Activated naive CD4-positive, alpha-beta T cell treated with anti-CD3 and anti-CD28 coated beads for 36 hours (primary cell): ENCODE measurements at regions of chr7 and their contacts with region 1.

Region 1: DNA sequence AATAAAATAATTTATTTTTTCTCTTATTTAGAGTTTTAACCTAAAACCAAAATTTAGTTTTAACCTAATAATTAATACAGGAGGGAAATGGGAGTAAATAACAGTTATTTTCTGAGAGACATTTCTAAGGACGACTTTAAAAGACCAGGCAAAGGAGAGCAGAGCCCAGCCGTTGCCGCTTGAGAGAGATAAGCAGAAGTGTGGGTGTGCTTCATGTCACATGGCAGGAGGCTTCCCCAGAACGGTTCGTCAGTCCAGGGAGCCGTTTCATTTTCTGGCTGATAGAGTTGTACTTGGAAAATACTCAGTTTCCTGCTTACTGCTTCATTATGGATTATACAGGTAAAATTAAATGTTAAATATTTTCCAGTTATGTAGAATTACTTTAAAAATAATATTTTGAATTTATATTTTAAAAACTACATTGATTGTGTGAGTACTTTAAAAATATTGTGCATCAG is 61.4 kb downstream of the ST7 start:
- DNase-seq: peak; percentile 28
- H3K4me3 Mint-ChIP-seq: no peak overlapping the region
- H3K27ac Mint-ChIP-seq: no peak overlapping the region
- H3K4me1 Mint-ChIP-seq: peaks cover 40% of the 10 kb centered on the region
- H3K27me3 Mint-ChIP-seq: peaks cover 3% of the 10 kb centered on the region

Region 2: DNA sequence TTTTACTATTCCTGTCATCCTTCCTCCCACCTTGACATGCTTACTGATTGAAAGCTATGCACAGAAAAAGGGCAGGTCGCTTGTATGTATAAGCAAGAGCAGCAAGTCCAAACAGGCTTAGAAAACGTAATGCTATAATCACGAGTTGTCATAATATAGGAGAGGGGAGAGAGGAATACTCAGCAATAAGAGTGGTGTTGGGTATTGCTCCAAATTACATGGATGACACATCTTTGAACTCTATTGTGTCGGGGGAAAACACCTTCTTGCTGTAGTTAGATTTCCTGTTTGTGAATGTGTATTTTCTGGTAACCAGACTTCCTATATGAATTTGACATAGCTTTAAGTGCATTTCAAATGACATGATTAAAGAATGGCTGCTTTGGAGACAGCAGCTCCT is 335.2 kb before region 1 on chr7:
- CTCF ChIA-PET with region 1: no interaction called
- intact Hi-C with region 1: loop called (anchors 5 kb)
- DNase-seq: no peak
- H3K4me3 Mint-ChIP-seq: no peak overlapping the region
- H3K27ac Mint-ChIP-seq: no peak overlapping the region
- H3K4me1 Mint-ChIP-seq: peaks cover 6% of the 10 kb centered on the region
- H3K27me3 Mint-ChIP-seq: peaks cover 25% of the 10 kb centered on the region

Region 3: GRCh38 chr7:116929914-116930913 is 84.5 kb before region 1 on chr7:
- CTCF ChIA-PET with region 1: interaction called, 6 read pairs
- intact Hi-C with region 1: loop called (anchors 1 kb)
- DNase-seq: peak; percentile 85
- H3K4me3 Mint-ChIP-seq: no peak overlapping the region
- H3K27ac Mint-ChIP-seq: no peak overlapping the region
- H3K4me1 Mint-ChIP-seq: peaks cover 3% of the 10 kb centered on the region
- H3K27me3 Mint-ChIP-seq: no peaks in the 10 kb centered on the region

Region 4: GRCh38 chr7:116984917-116985316 is 29.8 kb before region 1 on chr7:
- CTCF ChIA-PET with region 1: interaction called, 123 read pairs
- intact Hi-C with region 1: loop called (anchors 1 kb)
- DNase-seq: no peak
- H3K4me3 Mint-ChIP-seq: no peak overlapping the region
- H3K27ac Mint-ChIP-seq: no peak overlapping the region
- H3K4me1 Mint-ChIP-seq: peaks cover 2% of the 10 kb centered on the region
- H3K27me3 Mint-ChIP-seq: no peaks in the 10 kb centered on the region

Region 5: DNA sequence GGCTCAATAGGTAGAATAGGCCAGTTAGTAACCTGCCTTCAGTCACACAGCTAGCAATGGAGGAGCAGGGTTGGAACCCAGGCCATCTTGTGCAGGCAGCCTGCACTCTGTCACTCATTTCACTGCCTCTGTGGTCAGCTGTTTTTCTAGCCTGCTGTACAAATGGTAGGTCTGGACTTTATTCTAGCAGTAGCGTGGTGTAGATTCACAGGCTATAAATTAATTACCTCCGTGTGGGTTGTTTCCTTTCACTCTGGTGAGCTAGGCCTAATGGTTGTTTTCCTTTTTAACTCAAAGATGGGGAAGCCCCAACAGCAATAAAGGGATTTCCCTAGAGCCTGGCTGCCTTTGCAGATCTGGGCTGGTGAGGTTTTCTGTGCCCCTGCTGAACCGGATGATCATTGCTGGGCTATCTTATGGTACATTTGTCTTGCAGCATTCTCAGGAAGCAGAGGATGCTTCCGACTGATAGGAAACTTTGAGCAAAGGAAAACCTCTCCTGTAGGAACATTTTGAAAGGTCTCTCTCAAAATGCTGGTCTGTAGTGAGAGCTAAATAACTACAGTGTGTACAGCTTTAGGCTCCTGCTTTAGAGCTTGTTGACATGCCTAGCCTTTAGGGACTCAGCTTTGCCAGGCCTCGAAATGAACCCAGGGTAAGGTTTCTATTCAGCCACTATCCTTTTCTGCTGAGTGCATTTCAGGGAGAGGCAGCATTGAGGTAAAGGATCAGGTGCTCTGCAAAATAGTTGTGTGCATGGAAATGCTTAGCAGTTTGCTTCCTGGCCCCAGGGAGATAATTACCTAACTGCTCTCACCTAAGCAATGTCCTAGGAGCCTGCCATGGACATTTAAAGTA is 96.0 kb after region 1 on chr7:
- CTCF ChIA-PET with region 1: interaction called, 11 read pairs
- intact Hi-C with region 1: loop called (anchors 1 kb)
- DNase-seq: peak; percentile 75
- H3K4me3 Mint-ChIP-seq: peak overlapping the region; percentile 27
- H3K27ac Mint-ChIP-seq: peak overlapping the region; percentile 24
- H3K4me1 Mint-ChIP-seq: peaks cover 34% of the 10 kb centered on the region
- H3K27me3 Mint-ChIP-seq: no peaks in the 10 kb centered on the region

Region 6: DNA sequence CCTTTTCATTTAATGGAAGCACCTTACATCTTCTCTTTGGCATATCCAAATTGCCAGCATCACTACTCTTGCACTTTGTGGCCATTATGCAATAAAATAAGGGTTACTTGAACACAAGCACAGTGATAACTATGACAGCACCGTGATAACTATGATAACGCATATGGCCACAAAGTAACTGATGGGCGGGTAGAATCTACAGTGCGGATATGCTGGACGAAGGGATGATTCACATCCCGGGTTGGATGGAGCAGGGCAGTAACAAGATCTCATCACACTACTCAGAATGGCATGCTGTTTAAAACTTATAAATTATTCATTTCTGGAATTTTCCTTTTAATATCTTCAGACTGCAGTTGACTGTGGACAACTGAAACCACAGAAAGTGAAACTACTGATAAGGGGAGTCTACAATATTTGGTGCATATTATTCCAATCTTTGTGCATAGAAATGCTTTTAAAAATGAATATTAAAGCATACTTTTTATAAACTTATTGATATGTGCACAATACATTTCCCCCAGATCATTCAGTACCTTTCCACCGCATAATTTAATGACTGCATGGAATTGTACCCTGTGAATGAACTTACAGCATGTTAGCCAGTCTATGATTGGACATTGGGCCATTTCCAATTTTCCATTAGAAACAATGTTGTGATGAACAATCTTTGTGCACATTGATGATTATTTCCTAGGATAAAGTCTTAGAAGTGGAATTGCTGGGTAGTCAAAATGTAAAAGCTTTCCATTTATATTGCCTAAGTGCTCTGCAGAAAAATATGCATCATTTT is 171.7 kb after region 1 on chr7:
- CTCF ChIA-PET with region 1: no interaction called
- intact Hi-C with region 1: no loop called
- DNase-seq: no peak
- H3K4me3 Mint-ChIP-seq: no peak overlapping the region
- H3K27ac Mint-ChIP-seq: no peak overlapping the region
- H3K4me1 Mint-ChIP-seq: no peaks in the 10 kb centered on the region
- H3K27me3 Mint-ChIP-seq: no peaks in the 10 kb centered on the region